PC-9 (cell line): ENCODE measurements at regions of chr10 and their contacts with region 1.

Region 1: GRCh38 chr10:78047314-78047891 is 13.7 kb downstream of the RPS24 start:
- DNase-seq: peak; percentile 68 to 86
- H3K4me3 ChIP-seq: no peak overlapping the region
- H3K27ac ChIP-seq: no peak overlapping the region
- H3K4me1 ChIP-seq: no peaks in the 10 kb centered on the region
- H3K27me3 ChIP-seq: no peaks in the 10 kb centered on the region
- CTCF ChIP-seq: peak; percentile 96

Region 2: DNA sequence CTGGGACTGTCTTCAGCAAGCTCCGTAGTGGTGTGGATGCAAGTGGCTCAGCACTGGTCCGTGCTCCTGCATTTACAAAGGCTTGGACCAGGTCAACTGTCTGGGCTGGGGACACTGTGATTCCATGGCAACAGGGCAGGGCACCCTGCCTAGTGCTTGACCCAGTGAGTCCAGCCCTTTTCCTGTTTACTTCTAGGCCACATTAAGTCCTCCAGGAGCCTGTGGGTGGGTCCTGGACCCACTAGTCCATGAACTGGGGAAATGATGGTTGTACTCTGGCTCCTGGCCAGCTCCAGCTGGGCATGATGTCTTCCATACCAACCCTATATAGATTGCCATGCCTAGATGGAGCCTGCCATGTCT is 138.3 kb after region 1 on chr10:
- CTCF ChIA-PET with region 1: no interaction called
- POLR2A ChIA-PET with region 1: no interaction called
- intact Hi-C with region 1: no loop called
- DNase-seq: no peak
- H3K4me3 ChIP-seq: no peak overlapping the region
- H3K27ac ChIP-seq: no peak overlapping the region
- H3K4me1 ChIP-seq: no peaks in the 10 kb centered on the region
- H3K27me3 ChIP-seq: peaks cover 20% of the 10 kb centered on the region; the same call in 1 of the 2 replicates
- CTCF ChIP-seq: no peak

Region 3: GRCh38 chr10:78302989-78303854 is 255.8 kb after region 1 on chr10:
- CTCF ChIA-PET with region 1: no interaction called
- POLR2A ChIA-PET with region 1: interaction called, 4 read pairs
- intact Hi-C with region 1: loop called (anchors 5 kb)
- DNase-seq: peak; percentile 83 to 98
- H3K4me3 ChIP-seq: peak overlapping the region; percentile 66
- H3K27ac ChIP-seq: peak overlapping the region; percentile 42; the same call in 1 of the 2 replicates
- H3K4me1 ChIP-seq: peaks cover 10% of the 10 kb centered on the region
- H3K27me3 ChIP-seq: no peaks in the 10 kb centered on the region
- CTCF ChIP-seq: peak; percentile 81

Region 4: DNA sequence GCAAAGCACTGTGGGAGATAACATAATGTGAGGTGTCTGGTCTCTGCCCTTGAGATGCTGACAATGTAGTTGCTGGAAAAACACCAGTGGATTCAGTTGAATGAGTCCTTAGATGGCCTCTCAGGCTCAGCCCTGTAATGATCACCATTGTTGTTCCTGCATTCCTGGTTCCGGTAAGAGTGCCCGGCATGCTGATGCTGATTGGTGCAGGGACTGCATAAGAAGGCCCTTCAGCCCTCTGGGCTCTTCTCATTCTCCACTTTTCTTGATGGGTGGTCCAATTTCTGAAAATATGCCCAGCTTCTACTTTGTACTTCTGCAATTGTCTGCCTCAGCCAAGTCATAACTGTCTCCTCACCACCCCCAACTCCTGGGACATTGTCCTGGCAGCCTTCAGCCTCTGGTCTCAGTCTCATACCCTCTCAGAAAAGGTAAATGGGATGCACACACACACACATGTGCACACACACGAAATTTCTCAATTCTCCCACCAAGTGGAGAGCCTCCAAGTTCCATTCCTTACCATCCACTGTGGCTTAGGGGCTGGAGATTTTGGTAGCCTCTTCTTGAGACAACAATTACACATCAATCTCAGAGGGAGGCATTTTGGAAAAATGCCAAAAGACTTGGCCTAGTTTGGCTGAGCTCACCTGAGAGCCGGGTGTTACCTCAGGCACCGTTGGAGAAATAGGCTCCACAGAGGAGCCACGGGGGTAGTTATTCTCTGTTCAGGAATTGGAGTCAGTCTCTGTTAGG is 301.2 kb after region 1 on chr10:
- CTCF ChIA-PET with region 1: no interaction called
- POLR2A ChIA-PET with region 1: interaction called, 17 read pairs
- intact Hi-C with region 1: no loop called
- DNase-seq: no peak
- H3K4me3 ChIP-seq: no peak overlapping the region
- H3K27ac ChIP-seq: no peak overlapping the region
- H3K4me1 ChIP-seq: no peaks in the 10 kb centered on the region
- H3K27me3 ChIP-seq: peaks cover 9% of the 10 kb centered on the region; the same call in 1 of the 2 replicates
- CTCF ChIP-seq: no peak

Region 5: DNA sequence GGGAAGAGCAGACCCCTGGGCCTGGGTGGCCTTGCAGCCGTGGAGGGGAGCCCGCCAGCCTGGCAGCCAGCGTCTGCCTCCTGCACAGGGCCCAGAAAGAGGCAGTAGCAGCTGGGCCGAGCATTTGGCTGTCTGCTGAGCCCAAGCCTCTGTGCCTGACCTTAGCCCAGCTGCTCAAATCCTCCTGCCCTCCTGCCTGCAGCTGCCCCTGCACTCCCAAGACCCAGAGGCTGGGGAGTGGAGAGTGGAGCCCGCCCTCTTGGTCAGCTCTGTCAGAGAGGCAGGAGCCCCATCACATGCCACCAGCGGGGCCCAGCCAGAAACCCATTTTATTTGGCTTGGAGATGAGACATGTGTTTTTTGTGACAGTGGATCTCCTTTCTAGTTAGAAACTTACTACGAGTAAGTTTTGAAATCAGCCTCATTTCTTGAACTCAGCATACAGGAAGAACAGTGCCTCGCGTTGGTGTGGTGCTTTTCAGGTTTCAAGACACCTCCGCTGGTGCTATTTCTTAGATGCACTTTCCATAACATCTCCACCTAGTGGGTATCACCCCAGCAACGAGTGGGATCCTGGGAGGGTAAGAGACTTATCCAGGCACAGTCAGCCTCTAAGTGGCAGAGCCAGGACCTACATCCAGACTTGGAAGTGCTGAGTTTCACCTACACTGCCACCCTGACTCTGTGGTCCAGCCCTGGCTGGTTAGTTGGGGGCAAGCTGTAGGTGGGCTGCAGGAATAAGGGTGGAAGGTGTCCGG is 463.3 kb after region 1 on chr10:
- CTCF ChIA-PET with region 1: interaction called, 10 read pairs
- POLR2A ChIA-PET with region 1: no interaction called
- intact Hi-C with region 1: no loop called
- DNase-seq: peak in 1 of 2 experiments; percentile 26
- H3K4me3 ChIP-seq: no peak overlapping the region
- H3K27ac ChIP-seq: no peak overlapping the region
- H3K4me1 ChIP-seq: no peaks in the 10 kb centered on the region
- H3K27me3 ChIP-seq: 0 out of 2 replicates have a peak, but pooled peaks cover 5% of the 10 kb centered on the region
- CTCF ChIP-seq: no peak

Region 6: DNA sequence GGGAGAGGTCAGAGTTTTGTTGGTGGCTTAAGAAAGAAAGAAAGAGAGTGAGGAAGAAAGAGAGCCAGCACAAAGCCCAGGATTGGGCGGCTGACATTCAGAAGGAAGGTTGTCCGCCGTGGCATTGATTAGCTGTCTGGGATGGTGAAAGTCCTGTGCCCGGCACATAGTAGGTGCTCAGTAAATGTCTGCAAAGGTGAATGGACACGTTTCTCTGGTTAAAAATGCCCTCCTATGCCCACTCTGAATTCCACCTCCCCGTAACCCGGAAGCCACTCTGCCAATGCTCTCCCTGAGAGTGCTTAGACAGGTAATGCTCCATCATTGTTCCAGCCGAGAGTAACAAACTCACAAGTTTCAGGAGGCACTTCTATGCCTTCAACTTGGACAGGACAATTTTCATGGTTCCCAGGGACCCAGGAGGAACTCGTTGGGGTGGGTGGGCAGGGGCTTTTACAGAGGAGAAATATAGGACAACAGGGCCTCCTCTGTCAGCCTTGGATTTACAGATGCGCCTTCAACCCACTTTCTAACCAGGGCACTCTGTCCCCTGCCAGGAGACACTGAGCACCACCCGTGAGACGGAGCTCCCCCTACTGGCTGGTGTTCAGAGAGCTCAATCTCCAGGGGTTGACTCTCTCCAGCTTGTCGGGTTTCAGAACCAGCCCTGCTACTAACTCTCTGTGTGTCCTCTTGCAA is 609.9 kb after region 1 on chr10:
- CTCF ChIA-PET with region 1: no interaction called
- POLR2A ChIA-PET with region 1: no interaction called
- intact Hi-C with region 1: loop called (anchors 10 kb)
- DNase-seq: peak; percentile 40 to 77
- H3K4me3 ChIP-seq: no peak overlapping the region
- H3K27ac ChIP-seq: no peak overlapping the region
- H3K4me1 ChIP-seq: peaks cover 13% of the 10 kb centered on the region
- H3K27me3 ChIP-seq: peaks cover 6% of the 10 kb centered on the region; the same call in 1 of the 2 replicates
- CTCF ChIP-seq: peak; percentile 83

Region 7: GRCh38 chr10:78754270-78755062 is 707.1 kb after region 1 on chr10:
- CTCF ChIA-PET with region 1: no interaction called
- POLR2A ChIA-PET with region 1: no interaction called
- intact Hi-C with region 1: no loop called
- DNase-seq: no peak
- H3K4me3 ChIP-seq: no peak overlapping the region
- H3K27ac ChIP-seq: no peak overlapping the region
- H3K4me1 ChIP-seq: peaks cover 29% of the 10 kb centered on the region
- H3K27me3 ChIP-seq: no peaks in the 10 kb centered on the region
- CTCF ChIP-seq: no peak

Region 8: DNA sequence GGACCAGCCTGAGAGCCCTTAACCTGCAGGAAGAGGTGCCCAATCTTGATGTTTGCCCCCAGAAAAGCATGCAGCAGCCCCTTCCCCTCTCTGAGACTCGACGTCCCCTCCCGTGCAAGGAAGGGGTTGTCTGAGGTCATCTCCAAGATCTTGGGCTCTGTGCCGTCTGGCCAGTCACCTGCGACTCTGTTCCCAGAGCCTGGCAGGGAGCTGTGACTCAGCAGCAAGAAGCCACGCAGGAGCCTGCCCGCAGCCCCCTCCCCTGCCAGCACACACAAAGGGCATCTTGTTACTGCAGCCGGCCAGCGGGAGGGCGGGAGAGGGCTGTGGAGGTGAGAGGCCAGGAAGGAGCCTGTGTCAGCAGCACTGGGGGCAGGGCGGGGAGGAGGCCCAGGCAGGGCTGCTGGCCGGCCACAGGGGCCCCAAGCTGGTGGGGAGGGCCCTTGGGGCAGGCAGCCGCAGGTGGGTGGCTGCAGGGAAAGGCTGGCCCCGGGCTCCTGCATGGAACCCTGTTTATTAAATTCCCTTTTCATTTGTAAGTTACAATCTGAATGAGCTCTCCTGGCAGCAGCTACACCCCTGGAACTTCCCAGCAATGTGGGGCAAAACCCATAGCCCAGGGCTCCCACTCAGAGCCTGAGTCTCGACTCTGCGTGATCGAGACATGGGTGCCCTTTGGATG is 917.7 kb after region 1 on chr10:
- CTCF ChIA-PET with region 1: no interaction called
- POLR2A ChIA-PET with region 1: no interaction called
- intact Hi-C with region 1: loop called (anchors 5 kb)
- DNase-seq: peak; percentile 94 to 96
- H3K4me3 ChIP-seq: no peak overlapping the region
- H3K27ac ChIP-seq: peak overlapping the region; percentile 70
- H3K4me1 ChIP-seq: peaks cover 39% of the 10 kb centered on the region
- H3K27me3 ChIP-seq: no peaks in the 10 kb centered on the region
- CTCF ChIP-seq: no peak